Breast epithelium (tissue), 4 donors: ENCODE measurements at regions of chr6 and their contacts with region 1.

Region 1: GRCh38 chr6:155174576-155175211 is 89.1 kb upstream of the CLDN20 start:
- DNase-seq: peak in 1 of 2 donors; percentile 37
- H3K4me3 ChIP-seq: no peak overlapping the region
- H3K27ac ChIP-seq: no peak overlapping the region
- H3K4me1 ChIP-seq: peaks cover 0 to 4% of the 10 kb centered on the region in 2 donors
- H3K27me3 ChIP-seq: no peaks in the 10 kb centered on the region
- CTCF ChIP-seq: peak in 2 of 3 donors; percentile 40 to 62
- POLR2A ChIP-seq: no peak

Region 2: DNA sequence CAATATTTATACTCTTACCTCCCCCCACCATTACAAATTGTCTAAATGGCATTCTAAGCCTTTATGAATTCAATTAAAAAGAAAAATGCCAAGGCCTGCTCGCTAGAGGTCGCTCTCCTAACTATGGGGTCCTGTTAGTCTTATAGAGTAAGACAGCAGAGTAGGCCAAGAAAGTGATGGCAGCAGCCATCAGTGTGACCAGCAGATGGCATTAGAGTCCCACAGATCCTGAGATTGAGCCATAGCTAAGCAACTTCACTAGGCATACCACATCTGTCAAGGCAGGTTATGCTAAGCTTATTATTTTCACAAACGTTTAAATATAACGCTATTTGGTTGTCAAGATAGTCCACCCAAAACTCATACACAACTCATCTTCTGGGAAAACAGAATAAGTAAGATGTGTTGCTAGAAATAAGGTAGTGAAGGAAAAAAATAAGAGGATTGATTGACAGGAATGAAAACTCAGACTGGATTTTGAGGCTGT is 499.0 kb before region 1 on chr6:
- intact Hi-C with region 1: loop called (anchors 10 kb)
- DNase-seq: peak; percentile 72 to 89
- H3K4me3 ChIP-seq: no peak overlapping the region
- H3K27ac ChIP-seq: no peak overlapping the region
- H3K4me1 ChIP-seq: no peaks in the 10 kb centered on the region
- H3K27me3 ChIP-seq: no peaks in the 10 kb centered on the region
- CTCF ChIP-seq: peak; percentile 80 to 100 (median 97)
- POLR2A ChIP-seq: no peak

Region 3: GRCh38 chr6:155523821-155524651 is 349.3 kb after region 1 on chr6:
- intact Hi-C with region 1: no loop called
- DNase-seq: no peak
- H3K4me3 ChIP-seq: no peak overlapping the region
- H3K27ac ChIP-seq: no peak overlapping the region
- H3K4me1 ChIP-seq: no peaks in the 10 kb centered on the region
- H3K27me3 ChIP-seq: no peaks in the 10 kb centered on the region
- CTCF ChIP-seq: no peak
- POLR2A ChIP-seq: no peak

Region 4: DNA sequence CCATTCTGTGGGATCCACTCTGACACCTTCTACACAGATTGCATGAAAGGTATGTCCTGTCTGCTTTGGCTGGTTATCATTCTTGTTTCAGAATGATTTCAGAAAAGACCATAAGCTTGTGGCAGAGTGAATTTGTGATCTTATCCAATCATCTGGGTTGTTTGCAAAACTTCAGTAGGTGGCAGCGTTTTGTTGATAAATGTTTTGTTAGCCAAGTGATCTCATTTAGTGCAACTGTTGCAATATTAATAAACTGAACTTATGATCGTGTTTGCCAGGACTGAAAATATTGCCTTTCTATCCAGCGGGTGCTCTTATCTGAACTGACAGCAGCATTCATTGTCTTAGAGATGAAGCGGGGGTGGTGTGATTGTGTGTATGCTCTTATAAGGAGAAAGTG is 894.2 kb after region 1 on chr6:
- intact Hi-C with region 1: loop called (anchors 10 kb)
- DNase-seq: no peak
- H3K4me3 ChIP-seq: no peak overlapping the region
- H3K27ac ChIP-seq: no peak overlapping the region
- H3K4me1 ChIP-seq: no peaks in the 10 kb centered on the region
- H3K27me3 ChIP-seq: no peaks in the 10 kb centered on the region
- CTCF ChIP-seq: no peak
- POLR2A ChIP-seq: no peak